Mammary epithelial cell (primary cell): ENCODE measurements at regions of chr17 and their contacts with region 1.

Region 1: DNA sequence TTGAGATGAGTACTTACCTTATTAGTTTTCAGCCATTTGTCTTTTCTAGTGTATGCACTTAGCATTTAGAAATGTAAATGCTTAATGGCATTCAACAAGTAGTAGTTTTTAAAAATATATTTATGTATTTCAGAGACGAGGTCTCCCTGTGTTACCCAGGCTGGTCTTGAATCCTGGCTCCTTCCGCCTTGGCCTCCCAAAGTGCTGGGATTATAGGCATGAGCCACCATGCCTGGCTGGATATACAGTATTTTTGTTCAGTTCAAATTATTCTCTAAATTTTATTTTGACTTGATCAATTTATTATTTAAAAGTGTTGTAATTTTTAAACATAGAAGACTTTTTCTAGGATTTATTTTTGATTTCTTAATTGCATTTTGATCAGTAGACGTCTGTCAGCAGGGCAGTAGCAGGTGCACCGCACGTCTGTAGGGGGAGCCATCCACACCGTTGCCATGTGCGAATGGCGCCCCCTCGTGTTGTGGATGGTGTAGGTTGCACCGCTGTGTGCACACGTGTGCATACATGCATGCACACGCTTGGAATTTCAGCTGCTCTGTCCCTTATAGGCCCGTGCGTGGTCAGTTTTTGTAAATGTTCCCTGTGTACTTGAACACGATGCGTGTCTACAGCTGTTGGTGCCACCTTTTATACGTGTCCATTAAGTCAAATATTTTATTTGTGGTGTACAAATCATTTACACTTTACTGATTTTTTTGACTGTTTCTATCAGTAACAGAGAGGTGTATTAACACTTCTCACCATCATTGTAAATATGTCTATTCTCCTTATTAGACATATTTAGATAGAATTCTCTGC is 30.6 kb downstream of the RPTOR start:
- DNase-seq: peak; percentile 75
- H3K4me3 ChIP-seq: no peak overlapping the region
- H3K27ac ChIP-seq: peak overlapping the region; percentile 16
- H3K4me1 ChIP-seq: peaks cover 5% of the 10 kb centered on the region
- H3K27me3 ChIP-seq: no peaks in the 10 kb centered on the region
- CTCF ChIP-seq: peak; percentile 100

Region 2: DNA sequence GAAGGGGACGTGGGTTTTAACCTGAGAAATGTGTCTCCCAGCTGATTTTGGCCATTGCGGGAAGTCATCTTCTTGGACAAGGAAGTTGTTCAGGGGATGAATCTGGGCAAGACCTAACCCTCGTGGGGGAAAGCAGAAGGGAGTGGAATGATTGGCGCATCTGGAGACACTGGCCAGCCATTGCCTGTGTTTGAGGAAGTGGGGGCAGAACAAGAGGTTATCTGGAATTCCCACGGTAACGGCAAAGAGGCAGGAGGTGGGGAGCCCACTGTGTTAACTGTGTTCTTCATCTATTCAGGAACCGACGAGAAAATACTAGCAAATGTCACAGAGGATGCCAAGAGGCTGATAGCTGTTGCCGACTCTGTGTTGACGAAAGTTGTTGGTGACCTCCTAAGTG is 247.7 kb before region 1 on chr17:
- CTCF ChIA-PET with region 1: interaction called, 14 read pairs
- dilution Hi-C with region 1: no loop called
- in situ Hi-C with region 1: no loop called
- intact Hi-C with region 1: no loop called
- DNase-seq: no peak
- H3K4me3 ChIP-seq: no peak overlapping the region
- H3K27ac ChIP-seq: no peak overlapping the region
- H3K4me1 ChIP-seq: no peaks in the 10 kb centered on the region
- H3K27me3 ChIP-seq: no peaks in the 10 kb centered on the region
- CTCF ChIP-seq: no peak

Region 3: GRCh38 chr17:80454557-80455335 is 120.5 kb before region 1 on chr17:
- CTCF ChIA-PET with region 1: no interaction called
- dilution Hi-C with region 1: no loop called
- in situ Hi-C with region 1: no loop called
- intact Hi-C with region 1: loop called (anchors 1 kb)
- DNase-seq: peak; percentile 94
- H3K4me3 ChIP-seq: peak overlapping the region; percentile 71 to 82 (median 73)
- H3K27ac ChIP-seq: peak overlapping the region; percentile 85
- H3K4me1 ChIP-seq: peaks cover 20% of the 10 kb centered on the region
- H3K27me3 ChIP-seq: no peaks in the 10 kb centered on the region
- CTCF ChIP-seq: no peak

Region 4: DNA sequence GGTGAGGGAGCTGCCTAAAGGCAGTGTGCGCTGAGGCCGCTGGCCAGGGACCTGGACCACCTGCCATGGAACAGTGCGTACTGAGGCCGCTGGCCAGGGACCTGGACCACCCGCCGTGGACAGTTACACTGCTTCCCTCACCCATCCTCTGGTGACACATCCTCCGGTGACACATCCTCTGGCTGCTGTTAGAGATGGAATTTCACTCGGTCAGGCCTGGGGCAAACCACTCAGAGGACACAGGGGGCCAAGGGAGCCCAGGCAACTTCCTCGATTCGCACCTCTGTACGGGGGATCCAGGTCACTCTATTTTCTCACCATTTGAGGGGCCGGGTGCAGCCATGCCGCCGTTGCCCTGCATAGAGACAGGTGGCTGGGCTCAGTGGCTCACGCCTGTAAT is 63.0 kb before region 1 on chr17:
- CTCF ChIA-PET with region 1: no interaction called
- dilution Hi-C with region 1: no loop called
- in situ Hi-C with region 1: no loop called
- intact Hi-C with region 1: no loop called
- DNase-seq: no peak
- H3K4me3 ChIP-seq: no peak overlapping the region
- H3K27ac ChIP-seq: no peak overlapping the region
- H3K4me1 ChIP-seq: peaks cover 7% of the 10 kb centered on the region
- H3K27me3 ChIP-seq: no peaks in the 10 kb centered on the region
- CTCF ChIP-seq: no peak

Region 5: GRCh38 chr17:80619535-80620312 is 44.5 kb after region 1 on chr17:
- CTCF ChIA-PET with region 1: no interaction called
- dilution Hi-C with region 1: no loop called
- in situ Hi-C with region 1: no loop called
- intact Hi-C with region 1: loop called (anchors 2 kb)
- DNase-seq: peak; percentile 74
- H3K4me3 ChIP-seq: no peak overlapping the region
- H3K27ac ChIP-seq: peak overlapping the region; percentile 42
- H3K4me1 ChIP-seq: peaks cover 30% of the 10 kb centered on the region
- H3K27me3 ChIP-seq: no peaks in the 10 kb centered on the region
- CTCF ChIP-seq: no peak

Region 6: GRCh38 chr17:80866147-80866793 is 291.0 kb after region 1 on chr17:
- CTCF ChIA-PET with region 1: no interaction called
- dilution Hi-C with region 1: no loop called
- in situ Hi-C with region 1: no loop called
- intact Hi-C with region 1: loop called (anchors 10 kb)
- DNase-seq: peak; percentile 52
- H3K4me3 ChIP-seq: no peak overlapping the region
- H3K27ac ChIP-seq: no peak overlapping the region
- H3K4me1 ChIP-seq: peaks cover 18% of the 10 kb centered on the region
- H3K27me3 ChIP-seq: no peaks in the 10 kb centered on the region
- CTCF ChIP-seq: peak; percentile 78 to 82